ENCODE measurements at regions of chr3 and their contacts with region 1.

Region 1: DNA sequence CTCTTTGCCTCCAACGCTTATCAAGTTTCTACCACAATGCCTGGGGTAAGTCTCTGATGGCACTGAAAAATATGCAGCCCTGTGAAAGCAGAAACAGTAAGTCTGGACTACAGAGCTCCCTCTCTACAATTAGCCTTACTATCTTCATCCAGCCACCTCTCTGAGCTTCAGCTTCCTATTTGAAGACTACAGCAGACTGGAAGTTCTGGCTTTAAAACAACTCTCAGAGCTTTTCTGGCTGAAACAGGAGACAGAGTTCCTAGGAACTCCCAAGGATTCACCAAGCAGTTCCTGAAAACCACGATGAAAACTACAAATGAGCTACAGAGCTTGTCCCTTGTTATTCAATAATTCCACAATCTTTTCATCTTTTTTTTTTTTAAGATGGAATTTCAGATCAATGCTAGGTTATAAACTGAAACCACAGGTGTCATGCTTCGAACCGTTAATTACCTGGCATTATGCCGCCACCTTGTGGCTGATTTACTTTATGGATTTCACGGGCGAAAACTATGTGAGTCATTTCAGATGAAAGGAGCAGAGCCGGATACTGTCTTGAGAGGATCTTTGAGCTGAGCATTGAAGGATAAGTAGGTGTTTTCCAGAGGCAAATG is 3.9 kb downstream of the CRYGS start:
- DNase-seq: peak; percentile 95
- H3K4me3 Mint-ChIP-seq: no peak overlapping the region
- H3K27ac Mint-ChIP-seq: peak overlapping the region; percentile 47
- H3K4me1 Mint-ChIP-seq: peaks cover 60% of the 10 kb centered on the region
- H3K27me3 Mint-ChIP-seq: no peaks in the 10 kb centered on the region

Region 2: DNA sequence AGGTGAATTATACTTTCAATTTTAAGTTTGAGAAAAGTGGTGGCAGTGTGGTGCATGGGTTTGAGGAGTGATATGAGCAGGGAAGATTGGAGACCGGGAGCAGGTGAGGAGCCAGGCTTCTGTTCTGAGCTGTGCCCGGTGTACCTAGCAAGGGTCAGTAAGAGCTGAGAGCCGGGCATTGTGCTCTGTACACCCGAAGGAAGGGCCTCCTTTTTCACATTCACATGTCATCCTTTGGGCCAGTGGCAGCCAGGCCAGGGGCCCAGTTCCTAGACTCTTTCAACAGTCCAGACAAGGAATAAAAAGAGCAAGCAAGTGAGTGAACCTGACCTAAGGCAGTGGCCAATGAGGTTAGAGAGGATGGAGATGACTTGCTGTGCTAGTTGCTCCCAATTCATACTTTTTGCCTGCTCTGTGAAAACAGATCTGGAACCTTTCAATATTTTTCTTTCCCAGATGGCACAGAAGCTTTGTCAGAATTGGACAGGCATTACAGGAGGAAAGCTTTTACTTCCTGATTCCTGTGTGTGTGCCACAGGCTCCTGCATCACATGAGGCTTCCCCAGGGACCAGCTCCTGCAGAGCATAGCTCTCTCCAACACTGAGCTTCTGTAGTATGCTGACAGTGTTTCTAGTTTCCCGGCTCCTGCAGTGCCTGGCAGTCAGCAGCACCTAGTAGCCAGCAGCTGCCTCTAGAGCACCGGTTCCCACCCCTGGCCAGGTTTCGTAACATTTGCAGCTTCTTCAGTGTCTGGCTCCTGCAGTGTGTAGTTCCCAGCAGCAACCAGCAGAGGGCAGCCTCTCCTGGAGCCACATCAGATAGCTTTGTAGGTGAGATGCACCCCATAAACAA is 597.2 kb before region 1 on chr3:
- CTCF ChIA-PET with region 1: interaction called, 25 read pairs
- intact Hi-C with region 1: loop called (anchors 2 kb)
- DNase-seq: peak; percentile 92
- H3K4me3 Mint-ChIP-seq: peak overlapping the region; percentile 28
- H3K27ac Mint-ChIP-seq: no peak overlapping the region
- H3K4me1 Mint-ChIP-seq: peaks cover 17% of the 10 kb centered on the region
- H3K27me3 Mint-ChIP-seq: no peaks in the 10 kb centered on the region

Region 3: GRCh38 chr3:185992831-185993374 is 547.4 kb before region 1 on chr3:
- CTCF ChIA-PET with region 1: interaction called, 10 read pairs
- intact Hi-C with region 1: no loop called
- DNase-seq: no peak
- H3K4me3 Mint-ChIP-seq: no peak overlapping the region
- H3K27ac Mint-ChIP-seq: no peak overlapping the region
- H3K4me1 Mint-ChIP-seq: no peaks in the 10 kb centered on the region
- H3K27me3 Mint-ChIP-seq: no peaks in the 10 kb centered on the region

Region 4: DNA sequence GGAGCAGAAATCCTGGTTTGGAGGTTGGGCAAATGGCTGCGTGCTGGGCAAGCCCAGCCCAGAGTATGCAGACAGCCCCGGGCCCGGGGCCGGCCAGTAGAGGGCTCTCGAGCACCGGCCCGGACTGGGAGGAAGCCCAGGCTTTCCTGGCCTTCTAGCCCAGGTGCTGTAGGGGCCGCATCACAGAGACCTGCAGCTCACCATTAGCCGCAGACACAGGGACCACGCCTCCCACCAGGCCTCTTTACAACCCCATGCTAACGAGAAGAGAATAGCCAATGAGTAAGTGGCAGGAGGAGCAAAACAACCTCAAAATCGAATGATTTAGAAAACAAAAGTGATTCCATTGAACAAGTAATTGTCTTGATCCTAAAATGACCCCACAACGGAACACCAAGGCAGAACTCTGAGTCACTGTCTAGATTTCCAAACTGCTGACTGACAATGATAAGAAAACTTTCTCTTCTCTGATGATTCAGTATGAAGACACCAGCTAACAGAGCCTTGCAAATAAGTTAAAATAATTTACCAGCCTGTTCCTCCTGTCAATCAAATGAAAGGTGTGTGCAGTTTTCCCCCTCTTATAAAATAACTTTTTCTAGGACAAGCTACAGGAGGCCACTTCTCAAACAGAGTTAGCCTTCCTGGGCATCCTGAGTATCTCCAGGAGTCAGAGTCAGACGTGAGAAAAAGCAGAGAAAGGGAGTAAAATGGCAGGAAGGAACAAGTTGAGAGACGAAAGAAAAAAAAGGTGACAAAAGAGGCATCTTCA is 280.5 kb before region 1 on chr3:
- CTCF ChIA-PET with region 1: interaction called, 96 read pairs
- intact Hi-C with region 1: loop called (anchors 1 kb)
- DNase-seq: peak; percentile 78
- H3K4me3 Mint-ChIP-seq: peak overlapping the region; percentile 51
- H3K27ac Mint-ChIP-seq: peak overlapping the region; percentile 37
- H3K4me1 Mint-ChIP-seq: peaks cover 30% of the 10 kb centered on the region
- H3K27me3 Mint-ChIP-seq: peaks cover 2% of the 10 kb centered on the region

Region 5: GRCh38 chr3:186514296-186515002 is 25.9 kb before region 1 on chr3:
- CTCF ChIA-PET with region 1: interaction called, 50 read pairs
- intact Hi-C with region 1: no loop called
- DNase-seq: peak; percentile 71
- H3K4me3 Mint-ChIP-seq: no peak overlapping the region
- H3K27ac Mint-ChIP-seq: peak overlapping the region; percentile 78
- H3K4me1 Mint-ChIP-seq: peaks cover 79% of the 10 kb centered on the region
- H3K27me3 Mint-ChIP-seq: no peaks in the 10 kb centered on the region